Vagina (tissue), 2 donors: ENCODE measurements at regions of chr11 and their contacts with region 1.

Region 1: GRCh38 chr11:116787786-116788486 is at the start of gene ZPR1:
- DNase-seq: no peak
- H3K4me3 ChIP-seq: peak within 1 kb of the TSS; percentile 87 to 99
- H3K27ac ChIP-seq: peak within 1 kb of the TSS; percentile 76
- H3K4me1 ChIP-seq: peaks cover 27% of the 10 kb centered on the region
- H3K27me3 ChIP-seq: no peaks in the 10 kb centered on the region
- CTCF ChIP-seq: no peak
- POLR2A ChIP-seq: peak in 1 of 2 donors; percentile 23
- total RNA-seq, gene ZPR1: 19.4 TPM

Region 2: DNA sequence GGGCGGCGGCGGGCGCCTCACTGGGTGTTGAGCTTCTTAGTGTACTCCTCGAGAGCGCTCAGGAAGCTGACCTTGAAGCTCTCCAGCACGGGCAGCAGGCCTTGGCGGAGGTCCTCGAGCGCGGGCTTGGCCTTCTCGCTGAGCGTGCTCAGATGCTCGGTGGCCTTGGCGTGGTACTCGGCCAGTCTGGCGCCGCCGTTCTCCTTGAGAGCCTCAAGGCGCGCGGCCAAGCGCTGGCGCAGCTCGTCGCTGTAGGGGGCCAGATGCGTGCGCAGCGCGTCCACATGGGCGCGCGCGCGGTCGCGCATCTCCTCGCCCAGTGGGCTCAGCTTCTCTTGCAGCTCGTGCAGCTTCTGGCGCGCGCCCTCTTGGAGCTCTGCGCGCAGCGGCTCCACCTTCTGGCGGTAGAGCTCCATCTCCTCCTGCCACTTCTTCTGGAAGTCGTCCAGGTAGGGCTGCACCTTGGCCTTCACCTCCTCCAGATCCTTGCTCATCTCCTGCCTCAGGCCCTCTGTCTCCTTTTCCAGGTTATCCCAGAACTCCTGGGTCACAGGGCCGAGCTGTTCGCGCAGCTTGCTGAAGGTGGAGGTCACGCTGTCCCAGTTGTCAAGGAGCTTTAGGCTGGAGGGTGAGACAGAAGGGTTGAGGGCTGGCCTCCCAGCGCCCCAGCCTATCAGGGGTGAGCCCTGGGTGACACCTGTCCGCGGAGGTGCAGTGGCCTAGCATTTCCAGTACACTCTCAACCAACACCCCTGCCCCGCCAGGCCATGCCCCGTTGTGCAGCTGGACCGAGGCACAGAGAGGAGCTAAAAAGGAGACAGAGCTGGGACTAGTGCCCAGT is 48.1 kb after region 1 on chr11:
- intact Hi-C with region 1: loop called (anchors 1 kb)
- DNase-seq: no peak
- H3K4me3 ChIP-seq: peak overlapping the region; percentile 35 to 38
- H3K27ac ChIP-seq: peak overlapping the region; percentile 70
- H3K4me1 ChIP-seq: peaks cover 11% of the 10 kb centered on the region
- H3K27me3 ChIP-seq: no peaks in the 10 kb centered on the region
- CTCF ChIP-seq: peak in 2 of 3 experiments; percentile 17 to 63
- POLR2A ChIP-seq: no peak